ENCODE measurements at regions of chr11 and their contacts with region 1.

Region 1: DNA sequence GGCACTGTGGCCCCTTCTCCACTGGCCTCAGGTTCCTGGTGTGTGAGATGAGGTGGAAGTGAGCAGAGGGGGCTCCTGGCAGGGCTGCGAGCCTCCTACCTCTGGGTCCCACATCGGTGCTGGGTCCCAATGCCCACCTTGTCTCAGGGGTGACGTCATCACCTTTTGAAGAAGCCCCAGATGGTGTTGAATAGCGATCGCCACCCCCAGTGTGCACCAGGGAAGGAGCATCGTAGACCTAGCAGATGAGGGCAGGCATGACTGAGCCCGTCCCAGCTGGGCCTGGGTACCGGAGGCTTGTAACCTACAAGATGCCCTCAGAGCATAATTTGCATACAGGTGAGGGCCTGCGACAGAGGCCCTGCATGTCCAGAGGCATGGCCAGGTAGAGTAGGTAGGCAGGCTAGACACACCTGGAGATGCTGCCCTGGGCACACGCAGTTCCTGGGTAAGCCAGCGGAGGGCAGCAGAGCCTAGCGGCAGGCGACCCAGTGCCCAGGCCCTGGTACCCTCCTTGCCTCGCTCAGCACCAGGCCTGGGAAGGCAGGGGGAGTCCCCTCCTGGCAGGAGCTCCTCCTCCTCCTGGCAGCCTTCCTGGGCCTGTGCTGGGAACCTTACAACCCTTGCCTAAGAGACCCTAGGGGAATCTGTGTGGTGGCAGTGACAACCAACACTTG is 52.5 kb downstream of the TPCN2 start:
- DNase-seq: peak; percentile 82 to 93
- H3K4me3 ChIP-seq: no peak overlapping the region
- H3K4me3 Mint-ChIP-seq: no peak overlapping the region
- H3K27ac Mint-ChIP-seq: no peak overlapping the region
- H3K4me1 ChIP-seq: peaks cover 6% of the 10 kb centered on the region; the same call in 1 of the 2 replicates
- H3K4me1 Mint-ChIP-seq: peaks cover 8% of the 10 kb centered on the region
- H3K27me3 ChIP-seq: no peaks in the 10 kb centered on the region
- H3K27me3 Mint-ChIP-seq: no peaks in the 10 kb centered on the region
- CTCF ChIP-seq: peak; percentile 100

Region 2: DNA sequence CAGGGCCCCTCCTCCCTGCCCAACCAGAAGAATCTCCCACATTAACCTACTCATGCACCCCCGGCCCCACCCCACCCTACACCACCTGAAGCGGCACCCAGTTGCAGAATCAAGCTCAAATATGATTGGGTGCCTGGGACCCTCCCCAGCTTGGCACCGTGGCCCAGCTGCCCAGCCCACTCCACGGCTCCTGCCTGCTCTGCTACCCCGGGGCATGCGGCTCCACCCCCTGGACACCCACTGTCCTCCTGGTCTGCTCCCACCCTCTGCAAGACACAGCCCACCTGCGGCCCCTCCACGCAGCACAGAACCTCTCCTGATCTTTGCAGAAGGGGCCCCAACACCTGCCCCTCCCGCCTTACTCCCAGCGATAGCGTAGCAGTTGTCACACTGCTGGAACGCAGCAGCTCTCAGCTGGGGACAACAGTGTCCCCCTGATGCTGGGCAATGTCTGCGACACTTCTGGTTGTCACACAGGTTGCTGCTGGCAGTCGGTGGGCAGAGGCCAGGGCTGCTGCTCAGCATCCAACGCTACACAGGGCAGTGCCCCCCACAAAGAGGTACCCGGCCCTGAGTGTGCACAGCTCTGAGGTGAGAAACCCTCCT is 317.9 kb before region 1 on chr11:
- CTCF ChIA-PET with region 1: no interaction called
- POLR2A ChIA-PET with region 1: no interaction called
- intact Hi-C with region 1: no loop called
- DNase-seq: no peak
- H3K4me3 ChIP-seq: no peak overlapping the region
- H3K4me3 Mint-ChIP-seq: no peak overlapping the region
- H3K27ac Mint-ChIP-seq: no peak overlapping the region
- H3K4me1 ChIP-seq: peaks cover 8% of the 10 kb centered on the region; the same call in 1 of the 2 replicates
- H3K4me1 Mint-ChIP-seq: no peaks in the 10 kb centered on the region
- H3K27me3 ChIP-seq: no peaks in the 10 kb centered on the region
- H3K27me3 Mint-ChIP-seq: no peaks in the 10 kb centered on the region
- CTCF ChIP-seq: no peak

Region 3: GRCh38 chr11:69122642-69123431 is 21.6 kb after region 1 on chr11:
- CTCF ChIA-PET with region 1: interaction called, 4 read pairs
- POLR2A ChIA-PET with region 1: no interaction called
- intact Hi-C with region 1: loop called (anchors 2 kb)
- DNase-seq: peak; percentile 98 to 100
- H3K4me3 ChIP-seq: peak overlapping the region; percentile 6
- H3K4me3 Mint-ChIP-seq: peak overlapping the region; percentile 76
- H3K27ac Mint-ChIP-seq: peak overlapping the region; percentile 97
- H3K4me1 ChIP-seq: peaks cover 35% of the 10 kb centered on the region
- H3K4me1 Mint-ChIP-seq: peaks cover 40% of the 10 kb centered on the region
- H3K27me3 ChIP-seq: no peaks in the 10 kb centered on the region
- H3K27me3 Mint-ChIP-seq: no peaks in the 10 kb centered on the region
- CTCF ChIP-seq: no peak

Region 4: GRCh38 chr11:69211920-69212571 is 110.8 kb after region 1 on chr11:
- CTCF ChIA-PET with region 1: interaction called, 4 read pairs
- POLR2A ChIA-PET with region 1: no interaction called
- intact Hi-C with region 1: loop called (anchors 2 kb)
- DNase-seq: peak; percentile 29 to 32
- H3K4me3 ChIP-seq: no peak overlapping the region
- H3K4me3 Mint-ChIP-seq: no peak overlapping the region
- H3K27ac Mint-ChIP-seq: no peak overlapping the region
- H3K4me1 ChIP-seq: no peaks in the 10 kb centered on the region
- H3K4me1 Mint-ChIP-seq: no peaks in the 10 kb centered on the region
- H3K27me3 ChIP-seq: no peaks in the 10 kb centered on the region
- H3K27me3 Mint-ChIP-seq: peaks cover 2% of the 10 kb centered on the region
- CTCF ChIP-seq: peak; percentile 60 to 62

Region 5: GRCh38 chr11:69287968-69288882 is 187.0 kb after region 1 on chr11:
- CTCF ChIA-PET with region 1: interaction called, 3 read pairs
- POLR2A ChIA-PET with region 1: interaction called, 5 read pairs
- intact Hi-C with region 1: loop called (anchors 5 kb)
- DNase-seq: peak; percentile 98 to 99
- H3K4me3 ChIP-seq: peak overlapping the region; percentile 15
- H3K4me3 Mint-ChIP-seq: peak overlapping the region; percentile 65
- H3K27ac Mint-ChIP-seq: peak overlapping the region; percentile 48
- H3K4me1 ChIP-seq: peaks cover 53% of the 10 kb centered on the region
- H3K4me1 Mint-ChIP-seq: peaks cover 37% of the 10 kb centered on the region
- H3K27me3 ChIP-seq: no peaks in the 10 kb centered on the region
- H3K27me3 Mint-ChIP-seq: no peaks in the 10 kb centered on the region
- CTCF ChIP-seq: no peak

Region 6: GRCh38 chr11:69654569-69655327 is 553.5 kb after region 1 on chr11:
- CTCF ChIA-PET with region 1: interaction called, 7 read pairs
- POLR2A ChIA-PET with region 1: no interaction called
- intact Hi-C with region 1: loop called (anchors 5 kb)
- DNase-seq: peak; percentile 67 to 71
- H3K4me3 ChIP-seq: no peak overlapping the region
- H3K4me3 Mint-ChIP-seq: peak overlapping the region; percentile 50
- H3K27ac Mint-ChIP-seq: peak overlapping the region; percentile 14
- H3K4me1 ChIP-seq: peaks cover 42% of the 10 kb centered on the region
- H3K4me1 Mint-ChIP-seq: peaks cover 34% of the 10 kb centered on the region
- H3K27me3 ChIP-seq: no peaks in the 10 kb centered on the region
- H3K27me3 Mint-ChIP-seq: no peaks in the 10 kb centered on the region
- CTCF ChIP-seq: no peak

Region 7: GRCh38 chr11:69683764-69684333 is 582.6 kb after region 1 on chr11:
- CTCF ChIA-PET with region 1: interaction called, 10 read pairs
- POLR2A ChIA-PET with region 1: no interaction called
- intact Hi-C with region 1: no loop called
- DNase-seq: peak; percentile 77 to 79
- H3K4me3 ChIP-seq: no peak overlapping the region
- H3K4me3 Mint-ChIP-seq: no peak overlapping the region
- H3K27ac Mint-ChIP-seq: no peak overlapping the region
- H3K4me1 ChIP-seq: peaks cover 10% of the 10 kb centered on the region
- H3K4me1 Mint-ChIP-seq: peaks cover 10% of the 10 kb centered on the region
- H3K27me3 ChIP-seq: no peaks in the 10 kb centered on the region
- H3K27me3 Mint-ChIP-seq: no peaks in the 10 kb centered on the region
- CTCF ChIP-seq: peak; percentile 60 to 76

Measured in Caco-2 (cell line).